GM13976 (cell line): ENCODE measurements at regions of chr11 and their contacts with region 1.

Region 1: GRCh38 chr11:1050581-1051355 is 14.2 kb upstream of the MUC6 start:
- DNase-seq: peak; percentile 96
- CTCF ChIP-seq: peak; percentile 97

Region 2: DNA sequence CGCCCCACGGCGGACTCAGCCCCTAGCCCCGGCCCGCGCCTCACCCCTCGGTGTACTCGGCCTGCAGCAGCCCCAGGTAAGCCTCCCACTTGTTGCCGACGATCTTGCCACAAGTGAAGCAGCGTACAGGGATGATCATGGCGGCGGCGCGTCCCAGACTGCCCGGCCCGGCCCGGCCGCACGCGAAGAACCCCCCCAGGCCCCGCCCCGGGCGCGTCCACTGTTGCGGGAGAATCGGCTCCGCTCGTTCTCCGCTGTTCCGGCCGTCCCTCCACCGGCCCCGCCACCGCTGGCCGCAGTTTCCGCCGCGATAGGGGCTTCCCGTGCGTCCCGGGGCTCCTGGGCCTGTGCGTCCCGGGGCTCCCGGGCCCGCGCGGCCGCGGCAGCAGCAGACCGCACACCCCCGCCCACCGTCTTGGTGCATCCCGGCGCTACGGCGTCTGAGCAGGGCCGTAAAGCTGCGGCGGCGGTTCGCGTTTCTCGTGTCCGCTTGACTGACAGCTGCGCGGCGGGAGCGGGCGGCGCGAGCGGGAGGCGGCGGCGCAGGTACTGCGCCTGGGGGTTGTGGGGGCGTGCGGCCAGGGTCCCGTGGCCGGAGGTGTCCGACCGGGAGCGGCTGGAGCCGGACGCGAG is 208.3 kb before region 1 on chr11 and contains the starts of genes POLR2L and TSPAN4:
- in situ Hi-C with region 1: loop called (anchors 10 kb)
- DNase-seq: peak; percentile 95
- CTCF ChIP-seq: no peak

Region 3: DNA sequence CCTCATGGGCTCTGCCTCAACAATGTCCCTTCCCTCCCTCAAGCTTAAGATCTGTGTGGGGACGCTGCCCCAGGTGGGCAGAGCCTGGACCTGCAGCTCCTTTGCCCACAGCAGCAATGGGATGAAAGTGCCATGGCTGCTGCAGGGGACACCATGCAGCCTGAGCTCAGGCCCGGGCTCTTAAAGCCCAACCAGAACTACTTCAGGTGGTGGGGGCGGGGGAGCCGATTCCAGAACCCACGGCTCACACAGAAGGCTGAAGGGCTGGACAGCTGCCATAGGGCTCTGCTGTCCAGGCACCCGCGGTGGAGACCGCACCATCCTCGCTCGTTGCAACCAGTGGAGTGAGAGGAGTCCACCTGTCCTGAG is 152.6 kb before region 1 on chr11:
- in situ Hi-C with region 1: no loop called
- DNase-seq: no peak
- CTCF ChIP-seq: no peak

Region 4: GRCh38 chr11:933142-933851 is 117.5 kb before region 1 on chr11:
- in situ Hi-C with region 1: no loop called
- DNase-seq: no peak
- CTCF ChIP-seq: no peak

Region 5: DNA sequence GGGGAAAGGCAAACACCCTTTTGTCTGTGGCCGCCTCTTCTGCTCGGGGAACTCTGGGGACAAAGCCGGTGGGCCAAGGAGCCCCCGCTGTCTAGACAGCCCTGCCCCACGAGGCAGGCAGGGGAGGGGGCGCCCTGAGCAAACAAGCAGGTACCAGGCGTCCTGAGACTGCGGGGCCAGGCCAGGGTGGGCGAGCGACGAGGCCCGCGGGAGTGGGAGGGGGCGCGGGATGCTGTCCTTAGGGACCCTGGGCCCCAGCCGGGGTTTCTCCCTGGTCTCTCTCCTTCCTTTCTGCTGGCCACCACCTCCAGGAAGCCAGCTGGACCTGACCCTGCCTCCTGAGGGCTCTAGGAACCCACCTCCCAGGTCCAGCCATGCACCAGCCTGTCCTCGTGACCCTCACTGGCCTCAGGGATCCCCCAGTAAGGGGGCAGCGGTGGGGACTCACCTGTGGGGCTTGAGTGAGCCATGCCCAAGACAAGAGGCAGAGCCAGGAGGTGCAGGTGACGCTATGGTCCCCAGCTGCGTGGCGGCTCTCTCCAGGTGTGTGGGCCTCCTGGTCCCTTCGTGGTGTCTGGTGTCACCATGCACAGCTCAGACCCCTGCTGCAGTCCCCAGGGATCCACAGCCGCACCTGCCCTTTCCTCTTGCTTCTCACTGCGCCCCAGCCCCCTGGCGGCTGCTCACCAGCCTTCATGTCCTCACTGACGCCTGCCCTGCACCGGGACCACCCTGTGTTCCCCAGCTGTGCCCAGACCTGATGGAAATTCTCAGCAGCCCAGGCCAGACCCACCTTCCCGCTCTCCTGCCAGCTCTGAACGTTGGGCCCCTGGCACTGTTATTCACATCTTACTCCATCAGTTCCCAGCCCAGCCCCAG is 80.5 kb after region 1 on chr11:
- in situ Hi-C with region 1: loop called (anchors 25 kb)
- DNase-seq: no peak
- CTCF ChIP-seq: no peak